Tibial artery (tissue), 4 donors: ENCODE measurements at regions of chr15 and their contacts with region 1.

Region 1: DNA sequence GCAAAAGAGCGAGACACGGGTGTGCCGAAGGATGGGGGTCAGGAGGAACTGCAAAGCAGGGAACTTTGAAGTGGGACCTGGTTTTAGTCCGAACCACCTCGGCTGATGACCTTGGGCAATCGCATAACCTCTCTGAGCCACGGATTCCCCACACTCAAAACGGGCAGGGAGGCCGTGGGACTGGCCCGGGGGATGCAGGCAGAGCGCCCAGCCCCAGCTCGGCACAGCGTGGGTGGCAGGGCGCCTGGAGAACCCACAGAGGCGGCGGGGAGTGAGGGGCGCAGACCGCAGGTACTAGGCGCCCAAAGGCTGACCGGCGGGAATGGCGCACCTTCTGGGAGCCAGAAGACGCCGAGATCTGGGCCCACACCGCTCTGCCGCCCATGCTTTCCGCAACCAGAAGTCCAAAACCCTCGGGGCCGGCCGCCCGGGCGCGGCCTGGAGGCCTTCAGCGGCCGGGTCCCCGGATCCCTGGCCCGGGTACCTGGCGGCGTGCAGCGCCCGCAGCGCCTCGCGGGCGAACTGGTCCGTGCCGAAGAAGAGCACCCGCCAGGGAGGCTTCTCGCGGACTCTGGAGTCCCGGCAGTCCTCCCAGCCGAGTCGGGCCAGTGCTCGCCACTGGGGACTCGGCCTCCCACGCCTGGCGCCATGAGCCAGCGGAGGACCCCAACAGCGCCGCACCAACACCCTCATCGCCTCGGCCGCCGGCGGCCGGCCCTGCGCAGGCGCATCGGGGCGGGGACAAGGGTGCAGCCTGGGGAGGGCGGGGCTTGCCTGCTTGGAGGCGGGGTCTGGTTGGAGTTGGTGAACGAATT is at the start of gene MTFMT:
- DNase-seq: peak; percentile 93 to 94
- H3K4me3 ChIP-seq: peak within 1 kb of the TSS; percentile 87 to 93
- H3K27ac ChIP-seq: peak within 1 kb of the TSS; percentile 83 to 85
- H3K4me1 ChIP-seq: peaks cover 0 to 40% (median 11%) of the 10 kb centered on the region in 4 donors
- H3K27me3 ChIP-seq: no peaks in the 10 kb centered on the region
- CTCF ChIP-seq: no peak

Region 2: GRCh38 chr15:64979252-64979710 is 49.8 kb before region 1 on chr15:
- intact Hi-C with region 1: no loop called
- DNase-seq: no peak
- H3K4me3 ChIP-seq: no peak overlapping the region
- H3K27ac ChIP-seq: no peak overlapping the region
- H3K4me1 ChIP-seq: no peaks in the 10 kb centered on the region
- H3K27me3 ChIP-seq: no peaks in the 10 kb centered on the region
- CTCF ChIP-seq: no peak

Region 3: DNA sequence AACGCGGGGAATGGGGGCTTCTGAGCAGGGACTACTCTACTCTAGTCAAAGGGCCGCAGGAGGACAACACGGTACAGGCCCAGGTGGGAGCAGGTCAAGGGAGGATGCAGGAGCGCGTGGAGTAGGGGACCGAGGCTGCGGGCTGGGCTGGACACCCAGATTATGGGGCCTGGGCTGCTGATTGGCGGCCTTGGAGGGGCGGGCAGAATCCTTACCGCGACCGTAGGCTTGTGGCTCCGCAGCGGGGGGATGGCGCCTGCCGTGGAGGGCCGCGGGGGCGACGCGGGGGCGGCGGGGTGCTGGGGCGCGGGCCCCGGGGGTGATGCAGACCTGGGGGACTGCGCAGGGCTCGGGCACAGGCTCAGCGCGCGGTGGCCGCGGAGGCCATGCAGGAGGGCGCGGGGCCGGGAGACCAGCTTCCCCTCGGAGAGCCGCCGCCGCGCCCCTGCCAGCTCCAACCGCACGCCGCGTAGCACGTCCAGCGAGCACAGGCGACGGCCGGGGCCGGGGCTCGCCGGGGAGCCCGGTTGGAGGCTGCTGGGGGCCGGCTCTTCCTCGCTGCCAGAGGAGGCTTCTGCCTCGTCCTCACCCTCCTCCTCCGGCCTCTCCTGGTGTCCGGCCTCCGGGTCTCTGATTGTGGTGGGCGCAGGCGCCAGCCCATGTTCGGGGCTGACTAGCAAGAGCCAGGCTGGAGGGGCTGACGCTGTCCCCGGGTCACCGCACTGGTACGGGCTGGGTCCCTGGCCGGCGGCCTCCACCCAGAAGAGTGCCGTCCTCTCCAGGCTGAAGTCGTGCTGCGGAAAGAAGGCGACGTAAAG is 73.0 kb after region 1 on chr15:
- intact Hi-C with region 1: loop called (anchors 2 kb)
- DNase-seq: peak in 1 of 2 donors; percentile 65
- H3K4me3 ChIP-seq: no peak overlapping the region
- H3K27ac ChIP-seq: peak overlapping the region; percentile 29 to 53
- H3K4me1 ChIP-seq: peaks cover 0 to 19% (median 8%) of the 10 kb centered on the region in 4 donors
- H3K27me3 ChIP-seq: no peaks in the 10 kb centered on the region
- CTCF ChIP-seq: no peak

Region 4: DNA sequence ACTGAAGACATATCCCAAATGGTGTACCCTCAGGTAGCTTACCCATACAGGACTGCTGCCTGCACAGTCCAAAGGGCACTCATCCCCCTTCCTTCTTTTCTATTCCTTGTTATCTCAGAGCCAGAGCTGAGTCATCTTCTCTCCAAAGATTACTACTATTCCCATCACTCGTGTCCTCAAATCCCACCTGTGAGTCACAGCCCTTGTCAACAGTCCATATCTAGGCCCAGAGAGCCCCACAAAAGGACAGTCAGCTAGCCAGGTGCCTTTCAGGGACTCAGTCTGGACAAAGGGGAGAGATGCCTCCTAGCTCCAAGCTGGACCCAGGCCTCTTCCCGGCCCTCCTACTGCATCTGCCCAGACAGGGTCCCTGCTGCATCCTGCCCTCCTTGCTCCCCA is 246.6 kb after region 1 on chr15:
- intact Hi-C with region 1: loop called (anchors 10 kb)
- DNase-seq: no peak
- H3K4me3 ChIP-seq: no peak overlapping the region
- H3K27ac ChIP-seq: no peak overlapping the region
- H3K4me1 ChIP-seq: peaks cover 0 to 8% (median 0%) of the 10 kb centered on the region in 4 donors
- H3K27me3 ChIP-seq: no peaks in the 10 kb centered on the region
- CTCF ChIP-seq: no peak

Region 5: GRCh38 chr15:65304389-65305144 is 275.4 kb after region 1 on chr15 and contains the start of gene RNU5B-1:
- intact Hi-C with region 1: loop called (anchors 10 kb)
- DNase-seq: peak; percentile 68 to 87
- H3K4me3 ChIP-seq: peak within 1 kb of the TSS; percentile 56 to 70
- H3K27ac ChIP-seq: peak within 1 kb of the TSS; percentile 80 to 85
- H3K4me1 ChIP-seq: peaks cover 0 to 14% (median 4%) of the 10 kb centered on the region in 4 donors
- H3K27me3 ChIP-seq: no peaks in the 10 kb centered on the region
- CTCF ChIP-seq: peak in 1 of 2 experiments; percentile 86